Endothelial cell of umbilical vein (primary cell): ENCODE measurements at regions of chr1 and their contacts with region 1.

Region 1: DNA sequence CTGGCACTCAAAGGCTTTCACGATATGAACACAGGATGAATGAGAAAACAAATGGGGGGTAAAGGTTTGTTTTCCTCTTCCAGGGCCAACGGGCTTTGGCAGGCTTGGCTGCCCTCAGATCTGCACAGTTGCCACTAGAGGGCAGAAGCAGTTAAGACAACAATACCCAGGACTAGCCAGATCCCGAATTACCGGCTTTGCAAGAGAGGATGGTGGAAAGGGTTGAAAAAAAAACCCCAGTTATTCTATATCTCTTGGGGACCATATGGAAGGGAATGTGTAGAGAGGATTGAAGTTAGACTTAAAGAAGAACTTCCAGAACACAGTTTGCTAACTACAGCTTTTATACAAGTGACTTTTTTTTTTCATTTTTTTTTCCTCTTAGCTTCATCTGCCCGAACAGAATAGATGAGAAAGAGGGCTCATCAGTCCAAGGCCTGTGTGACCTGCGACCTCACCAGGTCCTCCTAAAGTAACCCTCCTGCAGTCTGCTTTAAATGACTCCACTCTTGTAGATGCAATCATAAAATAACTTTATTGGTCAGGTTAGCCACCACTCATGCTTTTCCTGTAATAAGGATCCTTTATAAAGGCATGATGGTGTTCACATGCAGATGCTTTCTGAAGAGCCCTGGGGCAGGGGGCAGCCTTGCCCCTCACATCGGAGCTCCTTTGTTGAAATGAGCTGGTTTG is 10.7 kb downstream of the FMOD start:
- DNase-seq: peak; percentile 76
- H3K4me3 ChIP-seq: no peak overlapping the region
- H3K27ac ChIP-seq: no peak overlapping the region
- H3K4me1 ChIP-seq: no peaks in the 10 kb centered on the region
- H3K27me3 ChIP-seq: peaks cover 33 to 42% of the 10 kb centered on the region in 2 experiments
- CTCF ChIP-seq: peak; percentile 82 to 89
- POLR2A ChIP-seq: no peak

Region 2: DNA sequence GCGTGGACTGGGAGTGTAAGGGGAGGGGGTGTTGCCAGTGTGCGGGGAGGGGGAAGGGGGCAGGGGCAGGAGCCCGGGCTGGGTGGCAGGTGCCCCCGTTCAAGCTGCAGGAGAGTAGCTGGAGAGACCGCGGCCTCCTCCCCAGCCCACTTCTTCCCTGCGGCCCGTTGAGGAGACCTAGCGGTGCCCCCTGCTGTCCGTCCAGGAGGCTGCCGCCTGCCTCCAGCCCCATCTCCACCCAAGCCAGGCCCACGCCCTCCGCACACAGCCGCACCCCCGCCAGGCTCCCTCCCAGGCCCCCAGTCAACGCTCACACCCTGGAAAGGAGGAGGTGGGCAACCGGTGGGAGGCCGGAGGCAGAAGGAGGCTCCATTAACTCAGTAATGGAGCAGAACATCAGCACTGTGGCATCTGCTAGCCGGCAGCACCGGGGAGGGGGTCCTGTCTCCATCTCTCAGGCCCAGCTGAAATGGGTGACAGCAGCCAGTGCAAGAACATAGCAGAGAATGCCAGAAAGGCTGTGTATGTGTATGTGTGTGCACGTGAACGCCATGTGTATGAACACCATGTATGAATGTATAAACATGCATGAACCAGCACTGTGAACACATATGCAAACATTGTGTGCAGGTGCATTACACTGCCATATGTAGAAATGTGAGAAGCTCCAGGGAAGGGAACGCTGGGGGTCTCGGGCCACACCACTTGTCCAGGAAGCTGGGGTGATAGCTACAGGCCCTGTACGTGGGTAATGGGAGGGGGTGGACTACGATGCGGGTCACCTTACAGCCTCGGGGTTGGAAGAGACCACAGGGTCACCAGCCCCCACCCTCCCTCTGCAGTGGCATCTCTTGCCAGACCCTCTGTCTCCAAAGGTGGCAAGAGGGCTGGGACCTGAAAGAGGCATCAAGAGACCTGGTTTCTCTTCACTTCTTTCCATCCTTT is 714.6 kb before region 1 on chr1:
- CTCF ChIA-PET with region 1: no interaction called
- POLR2A ChIA-PET with region 1: no interaction called
- dilution Hi-C with region 1: no loop called
- intact Hi-C with region 1: no loop called
- DNase-seq: peak; percentile 41
- H3K4me3 ChIP-seq: no peak overlapping the region
- H3K27ac ChIP-seq: no peak overlapping the region
- H3K4me1 ChIP-seq: no peaks in the 10 kb centered on the region
- H3K27me3 ChIP-seq: no peaks in the 10 kb centered on the region
- CTCF ChIP-seq: peak; percentile 46 to 91
- POLR2A ChIP-seq: no peak

Region 3: DNA sequence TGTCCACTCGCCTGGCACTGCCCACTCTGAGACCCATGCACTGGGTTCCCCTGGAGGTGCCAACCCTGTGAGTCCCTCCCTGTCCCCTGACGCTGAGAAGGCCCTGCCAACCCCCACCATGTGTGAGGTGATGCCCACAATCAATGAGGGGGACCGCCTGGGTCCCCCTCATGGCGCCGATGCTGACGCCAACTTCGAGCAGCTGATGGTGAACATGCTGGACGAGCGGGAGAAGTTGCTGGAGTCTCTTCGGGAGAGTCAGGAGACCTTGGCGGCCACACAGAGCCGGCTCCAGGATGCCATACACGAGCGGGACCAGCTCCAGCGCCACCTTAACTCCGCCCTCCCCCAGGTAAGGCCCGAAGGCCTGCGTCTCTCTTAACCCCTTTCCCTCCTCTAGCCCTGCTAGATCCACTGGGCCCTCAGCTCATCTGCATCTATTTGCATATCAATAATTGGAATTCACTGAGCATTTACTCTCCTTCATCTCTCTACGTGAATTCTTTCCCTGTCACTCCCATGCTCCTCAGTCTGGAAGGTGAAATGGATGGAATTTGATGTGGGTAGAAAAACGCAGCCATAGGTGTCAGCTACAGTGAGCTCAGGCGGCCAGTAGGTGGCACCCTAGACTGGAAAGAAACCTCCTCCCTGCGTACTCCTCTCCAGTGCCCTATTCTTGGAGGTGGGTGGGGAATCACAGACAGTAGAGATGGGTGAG is 301.2 kb before region 1 on chr1:
- CTCF ChIA-PET with region 1: interaction called, 10 read pairs
- POLR2A ChIA-PET with region 1: no interaction called
- dilution Hi-C with region 1: no loop called
- intact Hi-C with region 1: no loop called
- DNase-seq: peak; percentile 57
- H3K4me3 ChIP-seq: no peak overlapping the region
- H3K27ac ChIP-seq: no peak overlapping the region
- H3K4me1 ChIP-seq: no peaks in the 10 kb centered on the region
- H3K27me3 ChIP-seq: peaks cover 0 to 18% of the 10 kb centered on the region in 2 experiments
- CTCF ChIP-seq: peak; percentile 86
- POLR2A ChIP-seq: no peak

Region 4: DNA sequence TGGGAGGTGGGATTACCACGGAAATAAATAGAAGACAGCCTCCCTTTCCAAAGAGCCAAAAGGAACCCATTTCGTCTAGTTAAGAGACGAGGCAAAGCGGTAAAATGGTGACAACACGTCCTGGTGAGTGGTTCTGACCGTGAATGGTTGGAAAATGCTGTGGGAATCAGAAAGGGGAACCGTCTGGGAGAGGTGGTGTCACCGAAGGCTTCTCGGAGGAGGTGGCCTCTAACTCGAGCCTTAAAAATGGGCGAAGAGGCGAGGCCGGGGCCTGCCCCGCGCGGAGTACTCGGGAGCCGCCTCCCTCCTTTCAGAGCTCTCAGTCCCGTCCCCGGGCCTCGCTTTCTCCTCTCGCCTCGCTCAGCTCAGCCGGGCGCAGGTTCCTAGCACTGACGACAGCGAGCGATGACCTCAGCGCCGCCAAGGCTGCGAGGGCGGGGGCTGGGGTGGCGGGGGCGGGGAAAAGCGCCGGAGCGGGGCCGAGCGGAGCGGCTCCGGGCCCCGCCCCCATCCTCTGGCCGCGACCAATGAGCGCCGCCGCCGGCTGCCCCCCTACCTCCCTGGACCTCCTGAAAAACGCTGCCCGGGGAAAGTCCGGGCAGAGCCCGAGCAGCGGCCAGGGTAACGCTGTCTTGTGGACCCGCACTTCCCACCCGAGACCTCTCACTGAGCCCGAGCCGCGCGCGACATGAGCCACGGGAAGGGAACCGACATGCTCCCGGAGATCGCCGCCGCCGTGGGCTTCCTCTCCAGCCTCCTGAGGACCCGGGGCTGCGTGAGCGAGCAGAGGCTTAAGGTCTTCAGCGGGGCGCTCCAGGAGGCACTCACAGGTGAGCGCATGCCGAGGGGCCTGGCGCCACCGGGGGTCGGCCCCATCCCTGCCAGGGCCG is 35.1 kb before region 1 on chr1 and contains the start of gene BTG2:
- CTCF ChIA-PET with region 1: interaction called, 24 read pairs
- POLR2A ChIA-PET with region 1: interaction called, 3 read pairs
- dilution Hi-C with region 1: no loop called
- intact Hi-C with region 1: loop called (anchors 1 kb)
- DNase-seq: peak; percentile 91
- H3K4me3 ChIP-seq: peak within 1 kb of the TSS; percentile 70 to 97 (median 73)
- H3K27ac ChIP-seq: peak within 1 kb of the TSS; percentile 42
- H3K4me1 ChIP-seq: peaks cover 19% of the 10 kb centered on the region
- H3K27me3 ChIP-seq: peaks cover 4 to 7% of the 10 kb centered on the region in 2 experiments
- CTCF ChIP-seq: no peak
- POLR2A ChIP-seq: peak; percentile 99
- total RNA-seq, gene BTG2: 40.3 and 50.1 TPM in 2 replicates

Region 5: GRCh38 chr1:203326830-203327683 is 13.2 kb before region 1 on chr1:
- CTCF ChIA-PET with region 1: interaction called, 60 read pairs
- POLR2A ChIA-PET with region 1: no interaction called
- dilution Hi-C with region 1: no loop called
- intact Hi-C with region 1: no loop called
- DNase-seq: peak; percentile 94
- H3K4me3 ChIP-seq: peak overlapping the region; percentile 19 to 52 (median 39)
- H3K27ac ChIP-seq: no peak overlapping the region
- H3K4me1 ChIP-seq: peaks cover 19% of the 10 kb centered on the region
- H3K27me3 ChIP-seq: peaks cover 8 to 23% of the 10 kb centered on the region in 2 experiments
- CTCF ChIP-seq: no peak
- POLR2A ChIP-seq: peak; percentile 8

Region 6: DNA sequence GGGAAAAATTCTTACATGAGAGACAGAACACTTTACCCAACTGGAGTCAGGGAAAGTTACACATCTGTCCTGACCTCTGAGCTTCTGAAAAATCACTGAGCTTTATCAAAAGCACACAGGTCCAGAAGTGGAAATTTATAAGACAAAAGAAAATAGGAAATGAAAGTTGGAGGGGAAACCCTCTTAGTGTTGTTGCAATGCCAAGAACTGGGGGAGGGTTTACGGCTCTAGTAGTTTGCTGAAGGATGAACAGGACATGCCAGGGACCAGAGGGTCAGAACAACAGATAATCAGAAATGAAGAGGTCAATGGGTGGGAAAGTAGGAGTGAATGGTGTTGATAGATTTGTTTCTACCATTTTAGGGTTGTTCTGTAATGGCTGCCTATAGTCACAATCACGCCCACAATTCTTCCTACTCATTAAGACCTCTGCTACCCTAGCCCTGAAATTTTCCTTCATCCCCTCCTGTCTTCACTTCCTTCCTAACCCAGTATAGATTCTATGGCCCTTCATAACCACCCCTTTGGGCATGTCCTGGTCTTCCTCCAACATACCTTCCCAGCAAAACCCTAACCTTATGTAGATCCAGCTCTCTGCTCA is 41.0 kb after region 1 on chr1:
- CTCF ChIA-PET with region 1: interaction called, 12 read pairs
- POLR2A ChIA-PET with region 1: no interaction called
- dilution Hi-C with region 1: no loop called
- intact Hi-C with region 1: no loop called
- DNase-seq: peak; percentile 86
- H3K4me3 ChIP-seq: no peak overlapping the region
- H3K27ac ChIP-seq: no peak overlapping the region
- H3K4me1 ChIP-seq: no peaks in the 10 kb centered on the region
- H3K27me3 ChIP-seq: peaks cover 31 to 39% of the 10 kb centered on the region in 2 experiments
- CTCF ChIP-seq: no peak
- POLR2A ChIP-seq: no peak

Region 7: DNA sequence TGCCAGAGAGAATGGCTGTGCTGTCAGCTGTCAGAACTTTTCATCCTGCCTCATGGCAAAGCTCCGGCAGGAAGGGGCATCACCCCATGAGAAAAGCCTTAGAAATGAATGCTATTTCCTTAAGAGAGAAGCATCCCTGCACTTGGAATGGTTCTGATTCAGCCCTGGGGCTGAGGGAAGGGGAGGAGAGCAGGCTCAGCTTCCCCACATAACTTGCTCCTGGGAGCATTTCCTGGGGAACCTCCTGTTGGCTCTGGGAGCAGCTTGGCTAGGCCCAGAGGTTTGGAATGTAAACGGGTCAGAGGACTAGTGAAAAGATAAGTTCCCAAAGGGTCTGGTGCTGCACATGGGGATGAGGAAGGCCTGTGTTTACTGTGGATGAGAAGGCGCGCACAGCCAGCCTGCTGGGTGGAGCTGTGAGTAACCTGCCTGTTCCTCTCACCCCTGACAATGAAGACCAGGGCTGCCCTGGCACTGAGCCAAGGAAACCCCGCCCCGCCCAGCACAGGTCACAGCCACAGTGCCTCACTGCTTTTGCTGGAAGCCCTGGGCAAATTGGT is 140.3 kb after region 1 on chr1:
- CTCF ChIA-PET with region 1: interaction called, 125 read pairs
- POLR2A ChIA-PET with region 1: no interaction called
- dilution Hi-C with region 1: no loop called
- intact Hi-C with region 1: no loop called
- DNase-seq: peak; percentile 40
- H3K4me3 ChIP-seq: no peak overlapping the region
- H3K27ac ChIP-seq: no peak overlapping the region
- H3K4me1 ChIP-seq: peaks cover 7% of the 10 kb centered on the region
- H3K27me3 ChIP-seq: peaks cover 17 to 23% of the 10 kb centered on the region in 2 experiments
- CTCF ChIP-seq: no peak
- POLR2A ChIP-seq: no peak

Region 8: DNA sequence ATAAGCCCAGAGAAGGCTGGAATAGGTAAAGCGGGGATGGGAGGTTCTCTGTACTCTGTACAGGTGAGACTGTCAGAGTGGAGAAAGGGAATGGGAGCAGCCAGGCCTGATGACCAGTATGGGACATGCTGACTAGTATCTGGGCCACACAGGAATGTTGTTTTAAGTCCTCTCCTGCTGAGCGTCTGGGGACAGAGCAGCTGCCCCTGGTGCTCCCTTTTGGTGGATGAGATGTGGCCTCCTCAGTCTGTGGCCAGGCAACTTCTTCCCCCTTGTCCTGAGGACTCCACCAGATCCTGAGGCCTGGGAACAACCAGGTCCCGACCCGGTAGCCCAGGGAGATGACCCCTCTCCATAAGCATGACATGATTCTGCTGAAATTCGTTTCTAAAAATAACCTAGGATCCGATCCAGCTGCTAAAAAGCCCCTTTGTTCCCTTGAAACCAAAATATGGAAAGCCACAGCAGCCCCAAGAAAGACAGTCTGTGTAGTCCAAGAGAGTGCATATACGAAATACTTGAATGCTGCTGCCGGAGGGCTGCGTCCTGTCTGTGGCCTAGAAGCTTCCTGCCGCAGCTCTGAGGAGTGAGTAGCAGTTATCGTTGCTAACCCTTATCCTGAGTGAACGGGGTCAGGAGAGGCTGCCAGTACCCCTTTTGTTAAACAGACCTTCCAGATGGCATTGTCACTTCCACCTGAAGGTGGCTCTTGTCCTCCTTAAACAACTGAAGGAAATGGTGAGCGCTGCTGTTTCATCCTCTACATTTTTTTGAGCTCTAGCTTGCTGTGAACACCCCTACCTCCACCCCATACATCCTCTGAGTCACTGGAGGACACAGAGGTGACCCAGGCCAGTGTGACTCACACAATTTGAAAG is 333.5 kb after region 1 on chr1:
- CTCF ChIA-PET with region 1: no interaction called
- POLR2A ChIA-PET with region 1: no interaction called
- dilution Hi-C with region 1: no loop called
- intact Hi-C with region 1: no loop called
- DNase-seq: peak; percentile 97
- H3K4me3 ChIP-seq: no peak overlapping the region
- H3K27ac ChIP-seq: peak overlapping the region; percentile 88
- H3K4me1 ChIP-seq: peaks cover 41% of the 10 kb centered on the region
- H3K27me3 ChIP-seq: no peaks in the 10 kb centered on the region
- CTCF ChIP-seq: no peak
- POLR2A ChIP-seq: no peak